ENCODE measurements at regions of chr6 and their contacts with region 1.

Region 1: DNA sequence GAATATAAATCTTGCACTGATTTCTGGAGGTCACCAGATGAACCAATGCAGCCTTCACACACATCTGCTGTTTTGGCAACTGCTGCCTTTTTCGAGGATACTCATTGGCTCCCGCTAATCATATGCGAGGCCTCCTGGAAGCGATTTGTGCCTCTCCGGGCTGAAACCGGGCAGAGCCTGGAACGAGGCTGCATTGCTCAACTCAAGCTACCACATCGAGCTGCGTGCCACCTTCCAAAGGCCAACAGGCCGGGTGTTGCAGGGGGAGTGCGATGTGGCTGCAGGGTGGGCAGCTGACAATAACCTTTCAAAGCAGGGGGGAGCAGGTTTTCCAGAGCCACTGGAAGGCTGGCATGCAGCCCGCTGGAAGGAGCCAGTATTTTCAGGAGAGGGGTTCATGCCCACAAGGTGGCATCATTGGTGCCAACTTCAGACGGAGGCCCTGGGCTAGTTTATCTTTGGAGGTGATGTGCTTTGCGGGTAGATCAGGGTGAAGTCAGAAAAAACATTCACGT is 122.6 kb upstream of the IFNGR1 start:
- DNase-seq: peak; percentile 56 to 67 (median 62)
- H3K4me3 ChIP-seq: no peak overlapping the region
- H3K4me3 Mint-ChIP-seq: peak overlapping the region; percentile 4 to 92 (median 76)
- H3K27ac ChIP-seq: no peak overlapping the region
- H3K27ac Mint-ChIP-seq: peak overlapping the region in 1 of 7 donors; percentile 15
- H3K4me1 ChIP-seq: peaks cover 18% of the 10 kb centered on the region
- H3K4me1 Mint-ChIP-seq: peaks cover 15 to 32% (median 20%) of the 10 kb centered on the region in 4 donors
- H3K27me3 ChIP-seq: no peaks in the 10 kb centered on the region
- H3K27me3 Mint-ChIP-seq: no peaks in the 10 kb centered on the region

Region 2: DNA sequence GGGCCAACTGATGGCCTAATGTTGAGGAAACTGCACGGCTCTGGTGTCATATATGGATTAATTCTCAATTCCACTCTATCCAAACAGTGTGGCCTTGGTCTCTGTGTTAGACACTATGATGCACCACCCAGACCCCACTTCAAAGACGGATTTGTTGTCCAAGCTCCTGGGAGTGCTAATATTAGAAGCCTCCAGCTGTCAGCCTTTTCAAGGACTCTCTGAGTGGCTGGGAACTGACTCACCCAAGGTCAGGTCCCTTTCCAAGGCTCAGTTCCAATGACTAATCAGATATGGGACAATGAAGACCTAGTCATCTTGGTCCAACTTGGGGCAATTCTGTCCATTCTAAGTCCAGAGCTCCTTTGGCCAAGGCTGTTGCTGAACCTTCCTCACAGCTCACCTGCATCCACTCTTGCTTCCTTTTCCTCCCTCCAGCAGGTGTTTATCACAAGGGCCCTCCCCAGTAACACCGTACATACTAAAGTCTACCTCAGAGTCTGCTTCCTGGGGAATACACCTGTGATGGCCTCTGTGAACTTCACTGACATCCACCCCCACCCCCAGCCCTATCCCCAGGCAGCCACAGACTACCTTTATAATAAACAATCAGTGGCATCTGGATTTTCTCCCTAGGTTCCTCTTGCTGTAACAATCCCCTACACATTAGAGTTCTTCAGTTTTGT is 289.8 kb before region 1 on chr6:
- CTCF ChIA-PET with region 1: no interaction called
- POLR2A ChIA-PET with region 1: no interaction called
- intact Hi-C with region 1: no loop called
- DNase-seq: no peak
- H3K4me3 ChIP-seq: no peak overlapping the region
- H3K4me3 Mint-ChIP-seq: no peak overlapping the region
- H3K27ac ChIP-seq: no peak overlapping the region
- H3K27ac Mint-ChIP-seq: no peak overlapping the region
- H3K4me1 ChIP-seq: no peaks in the 10 kb centered on the region
- H3K4me1 Mint-ChIP-seq: no peaks in the 10 kb centered on the region
- H3K27me3 ChIP-seq: peaks cover 4% of the 10 kb centered on the region
- H3K27me3 Mint-ChIP-seq: peaks cover 34 to 36% of the 10 kb centered on the region in 2 donors

Region 3: GRCh38 chr6:137357263-137357947 is 15.7 kb after region 1 on chr6:
- CTCF ChIA-PET with region 1: interaction called, 26 read pairs
- POLR2A ChIA-PET with region 1: interaction called, 15 read pairs
- intact Hi-C with region 1: no loop called
- DNase-seq: no peak
- H3K4me3 ChIP-seq: no peak overlapping the region
- H3K4me3 Mint-ChIP-seq: no peak overlapping the region
- H3K27ac ChIP-seq: no peak overlapping the region
- H3K27ac Mint-ChIP-seq: no peak overlapping the region
- H3K4me1 ChIP-seq: peaks cover 17% of the 10 kb centered on the region
- H3K4me1 Mint-ChIP-seq: peaks cover 16 to 37% (median 25%) of the 10 kb centered on the region in 4 donors
- H3K27me3 ChIP-seq: no peaks in the 10 kb centered on the region
- H3K27me3 Mint-ChIP-seq: no peaks in the 10 kb centered on the region

Region 4: GRCh38 chr6:137370871-137371633 is 29.3 kb after region 1 on chr6:
- CTCF ChIA-PET with region 1: interaction called, 10 read pairs
- POLR2A ChIA-PET with region 1: interaction called, 3 read pairs
- intact Hi-C with region 1: no loop called
- DNase-seq: no peak
- H3K4me3 ChIP-seq: no peak overlapping the region
- H3K4me3 Mint-ChIP-seq: no peak overlapping the region
- H3K27ac ChIP-seq: no peak overlapping the region
- H3K27ac Mint-ChIP-seq: peak overlapping the region in 1 of 7 donors; percentile 25
- H3K4me1 ChIP-seq: peaks cover 9% of the 10 kb centered on the region
- H3K4me1 Mint-ChIP-seq: peaks cover 5 to 11% (median 8%) of the 10 kb centered on the region in 4 donors
- H3K27me3 ChIP-seq: no peaks in the 10 kb centered on the region
- H3K27me3 Mint-ChIP-seq: no peaks in the 10 kb centered on the region

Region 5: DNA sequence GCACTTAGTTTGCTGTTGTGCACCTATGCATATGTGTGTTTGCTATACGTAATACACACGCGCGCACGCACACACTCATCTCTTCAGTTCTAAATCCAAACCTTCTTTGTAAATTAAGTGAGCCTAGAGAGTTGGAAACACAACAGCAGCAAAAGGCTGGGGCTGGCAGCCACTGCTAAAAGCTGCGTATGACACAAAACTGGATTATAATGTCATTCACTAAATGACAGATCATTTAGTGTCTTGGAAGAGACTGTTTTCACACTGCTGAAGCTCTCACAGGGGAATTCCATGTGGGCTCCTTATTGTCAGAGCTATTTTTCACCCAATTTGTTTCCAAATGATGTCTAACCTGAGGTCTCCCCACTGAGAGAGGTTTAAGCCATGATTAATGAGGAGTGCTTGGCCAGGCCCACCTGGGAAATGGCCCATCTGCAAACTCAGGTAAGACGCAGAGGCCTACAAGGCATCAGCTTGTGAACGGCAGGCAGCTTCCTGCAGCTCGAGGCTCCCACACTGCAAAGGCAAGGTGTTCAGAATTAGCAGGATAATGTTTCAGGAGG is 58.2 kb after region 1 on chr6:
- CTCF ChIA-PET with region 1: interaction called, 11 read pairs
- POLR2A ChIA-PET with region 1: interaction called, 3 read pairs
- intact Hi-C with region 1: no loop called
- DNase-seq: no peak
- H3K4me3 ChIP-seq: no peak overlapping the region
- H3K4me3 Mint-ChIP-seq: no peak overlapping the region
- H3K27ac ChIP-seq: no peak overlapping the region
- H3K27ac Mint-ChIP-seq: no peak overlapping the region
- H3K4me1 ChIP-seq: peaks cover 7% of the 10 kb centered on the region
- H3K4me1 Mint-ChIP-seq: peaks cover 5 to 14% (median 11%) of the 10 kb centered on the region in 4 donors
- H3K27me3 ChIP-seq: no peaks in the 10 kb centered on the region
- H3K27me3 Mint-ChIP-seq: no peaks in the 10 kb centered on the region

Region 6: GRCh38 chr6:137415127-137415833 is 73.5 kb after region 1 on chr6:
- CTCF ChIA-PET with region 1: interaction called, 309 read pairs
- POLR2A ChIA-PET with region 1: interaction called, 82 read pairs
- intact Hi-C with region 1: loop called (anchors 1 kb)
- DNase-seq: peak; percentile 62 to 76 (median 73)
- H3K4me3 ChIP-seq: peak overlapping the region; percentile 48 to 53
- H3K4me3 Mint-ChIP-seq: peak overlapping the region; percentile 83 to 93 (median 88)
- H3K27ac ChIP-seq: peak overlapping the region; percentile 60
- H3K27ac Mint-ChIP-seq: peak overlapping the region; percentile 79 to 97 (median 92)
- H3K4me1 ChIP-seq: peaks cover 10% of the 10 kb centered on the region
- H3K4me1 Mint-ChIP-seq: peaks cover 6 to 20% (median 14%) of the 10 kb centered on the region in 4 donors
- H3K27me3 ChIP-seq: no peaks in the 10 kb centered on the region
- H3K27me3 Mint-ChIP-seq: no peaks in the 10 kb centered on the region

Region 7: DNA sequence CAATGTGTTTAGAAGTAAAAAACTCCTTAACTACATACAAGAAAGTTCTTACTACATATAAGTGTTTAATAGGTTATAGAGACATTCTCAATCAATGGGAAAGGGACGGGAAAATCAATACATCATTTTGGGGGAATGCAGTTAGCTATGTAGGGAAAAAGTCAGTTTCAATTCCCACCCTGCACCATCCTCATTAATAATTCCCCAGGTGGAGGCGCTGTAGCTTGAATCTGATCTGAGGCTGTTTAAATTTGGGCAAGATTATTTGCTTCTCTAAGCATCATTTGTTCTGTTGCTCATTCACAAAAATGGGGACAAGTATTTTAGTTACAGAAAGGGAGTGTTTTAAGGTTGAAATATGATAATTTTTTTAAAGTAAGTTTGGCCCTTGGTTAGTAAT is 133.4 kb after region 1 on chr6:
- CTCF ChIA-PET with region 1: no interaction called
- POLR2A ChIA-PET with region 1: no interaction called
- intact Hi-C with region 1: loop called (anchors 1 kb)
- DNase-seq: no peak
- H3K4me3 ChIP-seq: no peak overlapping the region
- H3K4me3 Mint-ChIP-seq: no peak overlapping the region
- H3K27ac ChIP-seq: no peak overlapping the region
- H3K27ac Mint-ChIP-seq: no peak overlapping the region
- H3K4me1 ChIP-seq: no peaks in the 10 kb centered on the region
- H3K4me1 Mint-ChIP-seq: no peaks in the 10 kb centered on the region
- H3K27me3 ChIP-seq: peaks cover 3% of the 10 kb centered on the region
- H3K27me3 Mint-ChIP-seq: peaks cover 9 to 17% of the 10 kb centered on the region in 2 donors

Region 8: GRCh38 chr6:137641474-137642077 is 299.8 kb after region 1 on chr6:
- CTCF ChIA-PET with region 1: interaction called, 8 read pairs
- POLR2A ChIA-PET with region 1: no interaction called
- intact Hi-C with region 1: loop called (anchors 1 kb)
- DNase-seq: peak; percentile 58 to 66 (median 64)
- H3K4me3 ChIP-seq: no peak overlapping the region
- H3K4me3 Mint-ChIP-seq: no peak overlapping the region
- H3K27ac ChIP-seq: no peak overlapping the region
- H3K27ac Mint-ChIP-seq: no peak overlapping the region
- H3K4me1 ChIP-seq: peaks cover 10% of the 10 kb centered on the region
- H3K4me1 Mint-ChIP-seq: peaks cover 6 to 15% (median 12%) of the 10 kb centered on the region in 4 donors
- H3K27me3 ChIP-seq: no peaks in the 10 kb centered on the region
- H3K27me3 Mint-ChIP-seq: peaks cover 4 to 5% of the 10 kb centered on the region in 2 donors

Measured in CD4-positive, alpha-beta memory T cell (primary cell).